Vagina (tissue), 2 donors: ENCODE measurements at regions of chr7 and their contacts with region 1.

Region 1: DNA sequence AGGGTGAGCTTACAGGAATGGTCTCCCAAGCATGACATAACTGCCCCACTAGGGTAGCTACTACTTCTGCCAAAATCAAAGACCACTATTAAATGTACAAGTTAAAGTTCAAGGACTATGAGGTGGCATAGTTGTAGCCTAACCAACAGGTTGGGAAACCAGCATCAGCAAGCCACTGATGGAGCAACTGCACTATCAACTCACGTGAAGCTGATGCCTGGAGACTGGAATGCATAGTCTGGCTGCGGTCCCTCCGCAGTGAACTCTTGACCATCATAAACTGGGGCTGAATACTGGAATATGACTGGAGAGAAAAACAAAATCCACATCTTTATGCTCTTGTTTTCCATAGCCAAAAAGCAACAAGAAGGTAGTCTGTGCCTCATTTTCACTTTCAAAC is 541.4 kb downstream of the DNAJB9 start:
- DNase-seq: no peak
- H3K4me3 ChIP-seq: no peak overlapping the region
- H3K27ac ChIP-seq: no peak overlapping the region
- H3K4me1 ChIP-seq: no peaks in the 10 kb centered on the region
- H3K27me3 ChIP-seq: no peaks in the 10 kb centered on the region
- CTCF ChIP-seq: no peak
- POLR2A ChIP-seq: no peak

Region 2: DNA sequence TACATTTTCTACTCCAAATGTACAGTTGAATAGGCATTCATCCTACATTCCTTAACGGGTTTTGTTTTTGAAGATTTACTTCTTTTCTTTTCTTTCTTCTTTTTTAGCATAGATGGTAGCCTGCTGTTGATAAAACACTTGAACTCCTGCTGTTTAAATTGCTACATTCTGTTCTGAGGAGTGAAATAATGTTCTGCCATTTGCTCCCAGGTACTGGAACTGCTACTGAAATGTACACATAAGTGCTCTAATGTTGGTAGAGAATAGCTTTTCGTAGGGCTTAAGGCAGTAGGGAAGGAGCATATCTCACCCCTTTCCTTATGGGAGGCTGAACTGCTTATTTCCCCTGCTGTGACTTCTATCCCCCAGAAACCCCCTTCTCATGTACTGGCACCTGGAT is 34.5 kb before region 1 on chr7:
- intact Hi-C with region 1: no loop called
- DNase-seq: no peak
- H3K4me3 ChIP-seq: no peak overlapping the region
- H3K27ac ChIP-seq: no peak overlapping the region
- H3K4me1 ChIP-seq: no peaks in the 10 kb centered on the region
- H3K27me3 ChIP-seq: no peaks in the 10 kb centered on the region
- CTCF ChIP-seq: no peak
- POLR2A ChIP-seq: no peak

Region 3: DNA sequence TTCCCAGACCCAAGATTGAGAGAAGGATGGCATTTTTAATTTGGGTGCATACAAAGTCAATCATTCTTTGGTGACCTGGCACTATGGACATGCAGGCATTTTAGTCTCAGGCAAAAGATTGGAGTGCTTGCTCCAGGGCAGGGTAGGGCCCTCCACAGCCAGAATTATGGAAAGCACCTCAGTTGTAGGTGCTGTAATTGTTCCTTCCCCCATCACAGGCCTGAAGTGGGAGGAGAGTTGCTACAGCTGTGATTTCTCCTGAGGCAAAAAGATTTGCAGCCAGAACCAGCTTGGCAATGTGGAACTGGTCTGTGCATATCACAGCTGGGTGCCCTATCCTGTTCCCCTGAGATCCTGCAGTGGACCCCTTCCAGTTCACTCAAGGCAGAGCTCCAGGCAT is 22.0 kb after region 1 on chr7:
- intact Hi-C with region 1: loop called (anchors 1 kb)
- DNase-seq: no peak
- H3K4me3 ChIP-seq: no peak overlapping the region
- H3K27ac ChIP-seq: no peak overlapping the region
- H3K4me1 ChIP-seq: no peaks in the 10 kb centered on the region
- H3K27me3 ChIP-seq: no peaks in the 10 kb centered on the region
- CTCF ChIP-seq: no peak
- POLR2A ChIP-seq: no peak